GM10248 (cell line): ENCODE measurements at regions of chr11 and their contacts with region 1.

Region 1: DNA sequence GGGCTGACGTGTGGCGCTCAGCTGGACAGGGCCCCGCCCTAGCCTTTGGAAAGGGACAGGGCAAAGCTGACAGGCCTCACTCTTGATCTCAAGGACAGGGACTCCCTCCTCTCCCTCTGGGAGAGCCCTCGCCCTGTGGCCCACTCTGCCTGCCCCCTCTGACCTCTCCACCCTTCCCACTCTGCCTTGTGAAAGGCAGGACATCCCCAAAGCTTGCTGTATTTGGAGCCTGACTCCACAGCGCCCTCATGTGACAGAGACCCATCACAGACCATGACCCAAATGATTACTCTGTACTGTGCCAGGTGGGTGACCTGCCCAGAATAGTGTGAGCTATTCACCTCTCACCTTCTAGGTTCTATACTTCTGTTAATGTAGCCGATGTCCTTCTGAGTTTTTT is 18.8 kb downstream of the P2RY2 start:
- DNase-seq: peak; percentile 79
- CTCF ChIP-seq: peak; percentile 83

Region 2: DNA sequence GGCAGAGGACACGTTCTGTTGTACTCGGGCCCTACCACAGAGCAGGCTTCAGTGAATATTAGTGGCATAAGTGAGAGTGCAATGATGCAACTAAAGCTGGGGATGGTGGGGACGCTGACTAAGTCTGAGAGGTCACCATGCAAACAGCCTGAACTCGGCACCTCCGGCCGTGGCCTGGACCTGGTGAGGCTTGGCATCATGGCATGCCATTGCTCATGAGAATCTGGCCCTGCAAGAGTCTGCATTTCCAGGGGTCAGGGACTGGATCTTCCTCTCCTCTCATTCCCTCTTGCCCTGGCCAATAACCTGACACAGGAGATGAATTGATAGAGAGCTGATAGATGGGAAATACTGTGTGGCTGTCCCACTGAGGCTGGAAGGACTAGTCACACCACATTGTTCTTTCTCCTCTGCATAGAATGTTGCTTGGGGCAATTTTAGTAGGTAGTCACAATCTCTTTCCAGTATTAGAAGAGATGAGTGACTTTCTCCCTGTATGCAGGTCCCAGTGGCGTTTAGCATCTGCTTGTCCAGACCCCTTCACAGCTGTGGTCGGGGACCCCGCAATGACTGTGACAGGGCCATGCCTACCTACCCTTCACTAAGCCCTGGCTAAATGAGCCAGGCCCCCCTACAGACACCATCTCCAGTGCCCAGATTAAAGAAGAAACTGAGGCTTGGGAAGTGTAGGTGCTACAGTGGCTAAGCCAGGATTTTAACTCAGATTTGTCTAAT is 42.9 kb before region 1 on chr11:
- CTCF ChIA-PET with region 1: interaction called, 90 read pairs
- POLR2A ChIA-PET with region 1: no interaction called
- DNase-seq: peak; percentile 49
- CTCF ChIP-seq: no peak

Region 3: GRCh38 chr11:73206801-73207200 is 30.1 kb before region 1 on chr11:
- CTCF ChIA-PET with region 1: interaction called, 22 read pairs
- POLR2A ChIA-PET with region 1: no interaction called
- DNase-seq: no peak
- CTCF ChIP-seq: no peak

Region 4: DNA sequence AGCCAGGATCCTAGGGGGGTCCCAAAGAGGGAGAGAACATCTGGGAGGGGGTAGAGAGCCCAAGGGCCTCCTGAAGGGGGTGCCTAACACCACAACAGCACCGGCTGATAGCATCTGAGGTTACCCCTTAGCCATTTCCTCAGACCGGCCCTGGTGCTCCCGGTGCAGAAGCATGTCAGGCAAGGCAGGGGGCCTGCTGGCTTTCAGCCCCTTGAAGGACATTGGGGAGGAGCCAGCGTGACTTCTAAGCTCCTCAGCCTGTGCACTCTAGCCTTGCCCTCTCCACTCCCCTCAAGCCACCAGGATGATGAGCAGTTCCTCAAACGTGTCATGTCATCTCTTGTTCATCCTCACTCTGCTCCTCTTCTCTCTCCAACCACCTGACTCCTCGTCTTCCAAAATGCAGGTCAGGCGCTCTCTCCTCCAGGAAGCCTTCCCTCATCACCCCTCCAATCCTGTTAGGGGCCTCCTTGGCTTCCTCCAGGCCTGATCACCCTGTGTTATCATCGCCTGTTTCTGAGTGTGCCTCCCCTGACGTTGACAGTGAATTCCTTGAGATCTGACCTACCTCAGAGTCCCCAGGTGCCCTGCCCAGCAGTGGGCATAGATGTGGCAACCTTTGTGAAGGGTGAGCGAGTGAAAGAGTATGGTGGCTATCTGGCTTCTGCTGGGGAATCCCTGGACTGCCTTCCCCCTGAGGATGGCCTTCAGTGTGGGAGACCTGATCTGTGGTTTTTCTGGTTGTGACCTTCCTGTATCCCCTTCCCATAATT is 12.7 kb before region 1 on chr11:
- CTCF ChIA-PET with region 1: interaction called, 13 read pairs
- POLR2A ChIA-PET with region 1: no interaction called
- DNase-seq: no peak
- CTCF ChIP-seq: no peak

Region 5: GRCh38 chr11:73288873-73289707 is 52.2 kb after region 1 on chr11:
- CTCF ChIA-PET with region 1: interaction called, 11 read pairs
- POLR2A ChIA-PET with region 1: no interaction called
- DNase-seq: peak; percentile 89
- CTCF ChIP-seq: peak; percentile 90